Ascending aorta (tissue), 2 donors: ENCODE measurements at regions of chr4 and their contacts with region 1.

Region 1: DNA sequence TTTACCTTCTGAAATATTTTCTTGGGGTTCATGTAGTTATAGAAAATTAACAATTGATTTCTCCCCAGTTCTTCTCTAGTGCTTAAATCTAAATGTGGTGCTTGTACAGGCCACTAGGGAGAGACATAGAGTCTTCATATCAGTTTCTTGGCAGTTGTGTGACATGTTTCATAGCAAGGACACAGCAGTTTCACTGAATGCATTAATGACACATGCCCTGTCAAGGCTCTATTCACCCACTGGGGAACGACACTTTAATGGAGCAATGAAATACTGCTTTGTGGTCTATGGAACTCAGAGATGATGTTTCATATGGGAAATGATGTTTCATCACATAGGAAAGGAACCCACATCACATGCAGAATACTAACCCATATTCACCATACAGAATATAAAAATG is 2.8 kb downstream of the VEGFC start:
- DNase-seq: no peak
- H3K4me3 ChIP-seq: no peak overlapping the region
- H3K27ac ChIP-seq: no peak overlapping the region
- H3K4me1 ChIP-seq: peaks cover 3% of the 10 kb centered on the region in 2 donors
- H3K27me3 ChIP-seq: no peaks in the 10 kb centered on the region
- CTCF ChIP-seq: peak in 2 of 3 experiments; percentile 58 to 68

Region 2: GRCh38 chr4:176675810-176676209 is 114.1 kb before region 1 on chr4:
- intact Hi-C with region 1: loop called (anchors 5 kb)
- DNase-seq: no peak
- H3K4me3 ChIP-seq: no peak overlapping the region
- H3K27ac ChIP-seq: no peak overlapping the region
- H3K4me1 ChIP-seq: peaks cover 0 to 7% of the 10 kb centered on the region in 2 donors
- H3K27me3 ChIP-seq: no peaks in the 10 kb centered on the region
- CTCF ChIP-seq: no peak

Region 3: DNA sequence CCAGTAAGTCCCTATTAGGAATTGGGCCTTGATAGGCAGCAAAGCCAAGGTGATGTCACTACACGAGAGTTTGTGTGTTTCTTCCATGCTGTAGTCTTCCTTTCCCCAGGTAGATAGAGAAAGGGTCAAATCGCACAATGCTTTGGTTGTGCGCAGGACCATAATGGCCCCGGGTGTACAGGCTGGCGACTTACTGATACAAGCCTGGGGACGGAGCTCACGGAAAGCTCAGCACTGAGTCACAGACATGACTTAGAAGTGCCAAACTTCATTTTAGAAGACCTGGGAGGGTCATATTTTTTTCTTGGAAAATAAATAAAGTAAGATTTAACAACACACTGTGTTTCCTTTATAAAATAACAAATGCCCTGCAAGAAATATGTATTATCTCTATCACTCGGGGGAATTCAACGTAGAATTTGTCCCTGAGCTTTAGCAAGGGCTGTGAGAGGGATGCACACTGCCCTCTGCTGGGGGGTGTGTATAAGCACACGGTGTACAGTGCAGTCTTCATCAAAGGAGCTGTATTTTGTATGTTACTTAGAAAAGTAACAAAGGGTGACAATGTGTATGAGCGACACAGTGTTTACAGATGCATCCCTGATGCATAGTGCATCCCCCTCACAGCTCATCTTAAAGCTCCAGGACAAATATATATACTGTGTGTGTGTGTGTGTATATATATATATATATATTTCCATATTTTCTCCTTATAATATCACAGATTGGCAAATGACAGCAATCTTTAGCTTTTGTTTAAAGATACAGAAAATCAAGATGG is 257.3 kb after region 1 on chr4:
- intact Hi-C with region 1: loop called (anchors 5 kb)
- DNase-seq: no peak
- H3K4me3 ChIP-seq: no peak overlapping the region
- H3K27ac ChIP-seq: no peak overlapping the region
- H3K4me1 ChIP-seq: no peaks in the 10 kb centered on the region
- H3K27me3 ChIP-seq: no peaks in the 10 kb centered on the region
- CTCF ChIP-seq: peak; percentile 32 to 73 (median 66)

Region 4: DNA sequence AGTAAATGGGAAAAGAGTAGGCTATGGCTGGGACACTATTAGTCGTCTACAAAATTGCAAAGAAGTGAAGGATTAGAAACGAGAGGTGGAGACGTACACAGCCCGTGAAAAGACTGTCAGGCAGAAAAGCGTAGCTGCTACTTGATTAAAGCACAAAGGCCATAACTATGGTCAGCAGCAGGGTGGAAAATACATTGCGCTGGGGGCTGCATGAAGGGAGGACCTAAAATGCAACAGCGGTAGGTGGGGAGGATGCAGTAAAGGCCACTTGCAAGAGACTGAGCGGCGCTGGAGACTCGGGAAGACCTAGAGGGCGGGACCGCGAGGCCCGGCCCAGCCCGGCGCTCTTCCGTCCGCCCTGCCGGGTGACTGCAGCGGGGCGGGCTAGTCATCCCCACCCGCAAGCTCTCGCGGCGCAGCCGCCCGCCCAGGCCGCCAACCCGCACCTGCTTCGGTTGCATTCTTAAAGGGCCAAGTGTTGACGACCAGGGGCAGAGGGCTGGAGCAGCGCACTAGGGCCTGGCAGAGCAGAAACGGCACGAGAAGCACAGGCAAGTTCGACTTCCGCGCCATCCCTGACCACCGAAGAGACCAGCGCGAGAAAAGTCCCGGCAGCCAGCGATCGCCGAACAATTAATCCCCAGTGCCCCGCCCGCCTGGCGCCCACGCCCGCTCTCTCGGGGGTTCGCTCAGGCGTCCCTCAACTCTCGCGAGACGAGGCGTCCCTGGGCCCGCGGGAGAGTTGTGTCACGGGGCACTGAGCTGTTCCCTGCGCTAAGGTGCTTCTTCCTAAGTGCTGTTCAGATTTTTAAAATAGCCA is 652.1 kb after region 1 on chr4 and contains the start of gene AGA:
- intact Hi-C with region 1: loop called (anchors 10 kb)
- DNase-seq: peak; percentile 88 to 98
- H3K4me3 ChIP-seq: peak within 1 kb of the TSS; percentile 60 to 83
- H3K27ac ChIP-seq: peak within 1 kb of the TSS; percentile 89 to 92
- H3K4me1 ChIP-seq: peaks cover 3 to 4% of the 10 kb centered on the region in 2 donors
- H3K27me3 ChIP-seq: no peaks in the 10 kb centered on the region
- CTCF ChIP-seq: no peak
- total RNA-seq, gene AGA: 4.5 TPM